Breast epithelium (tissue), 4 donors: ENCODE measurements at regions of chr3 and their contacts with region 1.

Region 1: GRCh38 chr3:5473471-5473870 is 286.0 kb downstream of the EDEM1 start:
- DNase-seq: no peak
- H3K4me3 ChIP-seq: no peak overlapping the region
- H3K27ac ChIP-seq: no peak overlapping the region
- H3K4me1 ChIP-seq: no peaks in the 10 kb centered on the region
- H3K27me3 ChIP-seq: no peaks in the 10 kb centered on the region
- CTCF ChIP-seq: no peak
- POLR2A ChIP-seq: no peak

Region 2: DNA sequence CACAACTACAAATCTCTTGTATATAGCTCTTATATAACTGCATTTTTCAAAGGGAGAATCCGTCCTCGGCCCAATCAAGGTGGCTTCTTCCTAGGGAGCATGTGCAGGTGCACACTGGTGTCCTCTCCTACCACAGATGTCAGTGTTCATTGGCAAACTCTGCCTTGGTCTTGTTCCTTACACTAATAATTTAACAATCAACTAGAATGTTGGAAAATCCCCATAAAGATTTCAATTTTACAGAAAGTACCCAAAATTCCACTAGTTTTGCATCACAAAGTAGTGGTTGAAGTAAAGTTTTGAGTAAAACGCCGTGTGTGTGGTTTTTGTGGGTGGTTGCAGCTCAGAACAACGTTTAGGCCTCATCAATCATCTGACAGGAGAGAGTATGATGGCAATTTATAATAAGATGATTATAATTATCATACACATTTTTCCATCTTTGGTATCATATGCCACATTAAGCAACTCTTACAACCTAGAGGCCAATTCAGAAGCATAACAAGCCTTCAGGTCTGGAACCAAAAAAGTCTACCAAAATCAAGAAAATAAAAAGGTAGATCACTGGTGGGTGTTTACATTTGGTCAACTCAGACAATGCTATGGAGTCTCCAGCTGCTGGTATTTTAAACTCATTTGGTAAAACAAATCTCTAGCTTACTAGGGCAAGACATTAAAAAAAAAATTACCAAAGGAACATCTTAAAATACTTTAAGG is 623.1 kb before region 1 on chr3:
- intact Hi-C with region 1: no loop called
- DNase-seq: no peak
- H3K4me3 ChIP-seq: no peak overlapping the region
- H3K27ac ChIP-seq: no peak overlapping the region
- H3K4me1 ChIP-seq: no peaks in the 10 kb centered on the region
- H3K27me3 ChIP-seq: no peaks in the 10 kb centered on the region
- CTCF ChIP-seq: no peak
- POLR2A ChIP-seq: no peak

Region 3: GRCh38 chr3:5232570-5232969 is 240.9 kb before region 1 on chr3:
- intact Hi-C with region 1: loop called (anchors 5 kb)
- DNase-seq: no peak
- H3K4me3 ChIP-seq: no peak overlapping the region
- H3K27ac ChIP-seq: no peak overlapping the region
- H3K4me1 ChIP-seq: no peaks in the 10 kb centered on the region
- H3K27me3 ChIP-seq: no peaks in the 10 kb centered on the region
- CTCF ChIP-seq: no peak
- POLR2A ChIP-seq: no peak